Activated CD8-positive, alpha-beta memory T cell treated with anti-CD3 and anti-CD28 coated beads, Interleukin-2, amount 10 ng/mL, durations not matched to agents 7 days and 5 days (primary cell): ENCODE measurements at regions of chr5 and their contacts with region 1.

Region 1: GRCh38 chr5:98928873-98929696 is at the start of gene CHD1:
- DNase-seq: peak; percentile 95
- ATAC-seq: peak; percentile 71
- H3K4me3 Mint-ChIP-seq: peak within 1 kb of the TSS; percentile 98
- H3K27ac Mint-ChIP-seq: peak within 1 kb of the TSS; percentile 100
- H3K4me1 Mint-ChIP-seq: peaks cover 47% of the 10 kb centered on the region
- H3K27me3 Mint-ChIP-seq: no peaks in the 10 kb centered on the region
- total RNA-seq, gene CHD1: 40.9 to 49.3 TPM

Region 2: GRCh38 chr5:98898743-98899142 is 30.3 kb before region 1 on chr5:
- CTCF ChIA-PET with region 1: no interaction called
- DNase-seq: no peak
- ATAC-seq: no peak
- H3K4me3 Mint-ChIP-seq: no peak overlapping the region
- H3K27ac Mint-ChIP-seq: no peak overlapping the region
- H3K4me1 Mint-ChIP-seq: peaks cover 1% of the 10 kb centered on the region
- H3K27me3 Mint-ChIP-seq: no peaks in the 10 kb centered on the region

Region 3: DNA sequence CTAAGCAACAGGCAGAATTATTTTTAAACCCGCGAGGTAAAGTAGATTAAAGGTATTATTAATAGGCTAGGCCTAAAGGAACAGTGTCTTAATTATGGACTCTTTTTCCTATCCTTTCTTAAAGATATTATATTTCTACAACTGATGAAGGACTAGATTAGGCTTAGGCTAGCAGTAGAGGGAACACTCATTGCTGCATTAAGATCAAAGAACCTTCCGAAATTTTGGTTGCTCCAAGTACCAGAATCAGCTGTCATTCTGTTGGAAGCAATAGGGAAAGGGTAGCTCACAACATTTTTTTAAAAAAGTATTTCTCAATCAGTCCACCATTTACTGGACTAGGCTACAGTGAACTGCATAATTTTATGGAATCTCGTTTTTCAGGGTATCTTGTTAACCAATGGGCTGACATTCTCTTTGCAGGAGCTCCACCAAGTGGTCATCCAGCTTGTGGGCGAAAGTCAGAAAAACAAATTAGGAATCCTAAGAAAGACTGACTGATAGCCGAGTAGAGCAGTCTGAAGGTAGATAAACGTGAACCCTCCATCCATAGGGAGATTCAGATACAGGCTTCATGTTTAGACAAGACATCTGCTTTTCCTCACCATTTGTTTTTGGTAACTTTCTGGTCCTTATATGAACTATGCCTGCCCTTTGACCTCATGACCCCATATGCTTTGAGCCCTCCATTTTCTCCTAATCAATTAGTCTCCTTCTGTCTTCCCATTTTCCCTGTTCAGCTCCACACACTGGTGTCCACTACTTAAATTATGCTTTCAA is 103.3 kb after region 1 on chr5:
- CTCF ChIA-PET with region 1: interaction called, 10 read pairs
- DNase-seq: peak; percentile 56
- ATAC-seq: no peak
- H3K4me3 Mint-ChIP-seq: peak overlapping the region; percentile 77
- H3K27ac Mint-ChIP-seq: peak overlapping the region; percentile 95
- H3K4me1 Mint-ChIP-seq: peaks cover 63% of the 10 kb centered on the region
- H3K27me3 Mint-ChIP-seq: no peaks in the 10 kb centered on the region